Activated T-helper 1 cell treated with anti-CD3 and anti-CD28 coated beads, Interleukin-12 subunit alpha, Interleukin-12 subunit beta, Interleukin-2, Interleukin-4 antibody, amounts not matched to agents 30 ng/mL and 10 ng/mL and 1 ng/mL, durations not matched to agents 14 hours and 24 hours and 36 hours (primary cell): ENCODE measurements at regions of chr18 and their contacts with region 1.

Region 1: GRCh38 chr18:21281611-21282010 is 39.6 kb downstream of the GREB1L start:
- DNase-seq: no peak
- H3K4me3 Mint-ChIP-seq: no peak overlapping the region
- H3K27ac Mint-ChIP-seq: no peak overlapping the region
- H3K4me1 Mint-ChIP-seq: no peaks in the 10 kb centered on the region
- H3K27me3 Mint-ChIP-seq: peaks cover 7% of the 10 kb centered on the region

Region 2: DNA sequence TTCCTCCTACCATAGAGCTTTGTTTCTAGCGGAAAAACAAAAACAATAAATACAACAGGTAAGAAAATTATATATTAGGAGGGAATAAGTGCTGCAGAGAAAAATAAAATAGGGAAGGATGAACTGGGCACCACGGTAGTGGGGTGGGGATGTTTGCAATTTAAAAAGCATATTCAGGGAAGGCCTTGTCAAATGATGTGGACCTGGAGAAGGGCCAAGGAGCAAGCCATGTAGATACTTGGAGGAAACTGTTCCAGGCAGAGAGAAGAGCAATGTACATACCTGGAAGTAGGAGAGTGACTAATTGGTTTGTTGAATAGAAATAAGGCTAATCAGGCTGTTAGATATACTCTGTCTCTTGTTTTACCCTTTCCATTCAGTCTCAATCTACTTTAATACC is 306.5 kb before region 1 on chr18:
- intact Hi-C with region 1: no loop called
- DNase-seq: no peak
- H3K4me3 Mint-ChIP-seq: no peak overlapping the region
- H3K27ac Mint-ChIP-seq: no peak overlapping the region
- H3K4me1 Mint-ChIP-seq: peaks cover 5% of the 10 kb centered on the region
- H3K27me3 Mint-ChIP-seq: no peaks in the 10 kb centered on the region

Region 3: DNA sequence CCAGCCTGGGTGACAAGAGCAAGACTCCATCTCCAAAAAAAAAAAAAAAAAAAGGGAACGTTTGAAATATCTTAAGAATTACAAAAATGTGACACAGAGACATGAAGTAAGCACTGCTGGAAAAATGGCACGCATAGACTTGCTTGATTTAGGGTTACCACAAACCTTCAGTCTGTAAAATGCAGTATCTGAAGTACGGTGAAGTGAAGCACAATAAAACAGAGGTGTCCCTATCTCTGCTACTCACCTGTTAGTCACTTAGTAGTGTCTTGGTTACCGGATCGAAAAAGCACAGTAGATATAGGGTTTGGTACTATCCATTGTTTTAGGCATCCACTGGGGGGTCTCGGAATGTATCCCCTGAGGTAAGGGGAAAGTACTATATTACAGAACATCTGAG is 51.2 kb before region 1 on chr18:
- intact Hi-C with region 1: loop called (anchors 10 kb)
- DNase-seq: no peak
- H3K4me3 Mint-ChIP-seq: no peak overlapping the region
- H3K27ac Mint-ChIP-seq: no peak overlapping the region
- H3K4me1 Mint-ChIP-seq: no peaks in the 10 kb centered on the region
- H3K27me3 Mint-ChIP-seq: peaks cover 3% of the 10 kb centered on the region

Region 4: GRCh38 chr18:21254576-21254975 is 27.0 kb before region 1 on chr18:
- intact Hi-C with region 1: no loop called
- DNase-seq: no peak
- H3K4me3 Mint-ChIP-seq: no peak overlapping the region
- H3K27ac Mint-ChIP-seq: no peak overlapping the region
- H3K4me1 Mint-ChIP-seq: no peaks in the 10 kb centered on the region
- H3K27me3 Mint-ChIP-seq: peaks cover 2% of the 10 kb centered on the region

Region 5: DNA sequence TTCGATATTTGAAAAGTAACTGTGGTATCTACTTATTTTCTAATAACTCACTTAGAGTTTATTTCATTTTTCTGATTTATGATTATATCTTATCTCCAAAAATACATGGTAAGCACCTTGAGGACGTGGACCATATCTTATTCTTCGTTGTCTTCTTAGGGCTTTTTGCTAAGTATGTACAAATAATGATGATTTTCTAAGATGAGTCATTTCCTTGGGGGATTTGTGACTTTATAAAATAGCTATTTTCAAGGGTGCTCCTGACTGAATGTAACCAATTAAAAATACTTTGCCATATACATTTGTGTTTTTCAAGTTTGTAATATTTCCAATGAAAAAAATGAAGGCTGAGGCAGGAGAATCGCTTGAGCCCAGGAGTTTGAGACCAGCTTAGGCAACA is 16.7 kb after region 1 on chr18:
- intact Hi-C with region 1: no loop called
- DNase-seq: no peak
- H3K4me3 Mint-ChIP-seq: no peak overlapping the region
- H3K27ac Mint-ChIP-seq: no peak overlapping the region
- H3K4me1 Mint-ChIP-seq: no peaks in the 10 kb centered on the region
- H3K27me3 Mint-ChIP-seq: peaks cover 2% of the 10 kb centered on the region

Region 6: DNA sequence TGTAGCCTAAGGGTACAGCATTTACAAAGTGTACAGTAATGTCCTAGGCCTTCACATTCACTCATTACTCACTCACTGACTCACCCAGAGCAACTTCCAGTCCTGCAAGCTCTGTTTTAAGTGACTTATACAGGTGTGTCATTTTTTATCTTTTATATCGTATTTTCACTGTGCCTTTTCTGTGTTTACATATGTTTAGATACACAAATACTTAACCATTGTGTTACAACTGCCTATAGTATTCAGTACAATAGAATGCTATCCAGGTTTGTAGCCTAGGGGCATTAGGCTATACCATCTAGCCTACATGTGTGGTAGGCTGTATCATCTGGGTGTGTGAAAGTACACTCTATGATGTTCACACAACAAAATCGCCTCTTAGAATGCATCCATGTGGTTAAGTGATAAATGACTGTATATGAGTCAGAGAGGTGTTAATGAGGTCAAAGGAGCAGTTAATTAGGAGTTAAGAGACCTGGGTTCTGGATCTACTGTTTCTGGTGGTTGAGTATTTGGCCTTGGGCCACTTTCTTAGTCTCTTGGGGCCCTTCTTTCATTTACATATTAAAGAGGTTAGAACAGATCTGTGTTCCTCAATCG is 109.6 kb after region 1 on chr18:
- intact Hi-C with region 1: no loop called
- DNase-seq: no peak
- H3K4me3 Mint-ChIP-seq: no peak overlapping the region
- H3K27ac Mint-ChIP-seq: no peak overlapping the region
- H3K4me1 Mint-ChIP-seq: no peaks in the 10 kb centered on the region
- H3K27me3 Mint-ChIP-seq: peaks cover 4% of the 10 kb centered on the region